Activated T-helper 2 cell treated with anti-CD3 and anti-CD28 coated beads, Interferon-gamma antibody, Interleukin-2, Interleukin-4, amounts not matched to agents 10 μg/mL and 5 μg/mL and 100 μg/mL, durations not matched to agents 14 hours and 24 hours and 36 hours (primary cell): ENCODE measurements at regions of chr4 and their contacts with region 1.

Region 1: DNA sequence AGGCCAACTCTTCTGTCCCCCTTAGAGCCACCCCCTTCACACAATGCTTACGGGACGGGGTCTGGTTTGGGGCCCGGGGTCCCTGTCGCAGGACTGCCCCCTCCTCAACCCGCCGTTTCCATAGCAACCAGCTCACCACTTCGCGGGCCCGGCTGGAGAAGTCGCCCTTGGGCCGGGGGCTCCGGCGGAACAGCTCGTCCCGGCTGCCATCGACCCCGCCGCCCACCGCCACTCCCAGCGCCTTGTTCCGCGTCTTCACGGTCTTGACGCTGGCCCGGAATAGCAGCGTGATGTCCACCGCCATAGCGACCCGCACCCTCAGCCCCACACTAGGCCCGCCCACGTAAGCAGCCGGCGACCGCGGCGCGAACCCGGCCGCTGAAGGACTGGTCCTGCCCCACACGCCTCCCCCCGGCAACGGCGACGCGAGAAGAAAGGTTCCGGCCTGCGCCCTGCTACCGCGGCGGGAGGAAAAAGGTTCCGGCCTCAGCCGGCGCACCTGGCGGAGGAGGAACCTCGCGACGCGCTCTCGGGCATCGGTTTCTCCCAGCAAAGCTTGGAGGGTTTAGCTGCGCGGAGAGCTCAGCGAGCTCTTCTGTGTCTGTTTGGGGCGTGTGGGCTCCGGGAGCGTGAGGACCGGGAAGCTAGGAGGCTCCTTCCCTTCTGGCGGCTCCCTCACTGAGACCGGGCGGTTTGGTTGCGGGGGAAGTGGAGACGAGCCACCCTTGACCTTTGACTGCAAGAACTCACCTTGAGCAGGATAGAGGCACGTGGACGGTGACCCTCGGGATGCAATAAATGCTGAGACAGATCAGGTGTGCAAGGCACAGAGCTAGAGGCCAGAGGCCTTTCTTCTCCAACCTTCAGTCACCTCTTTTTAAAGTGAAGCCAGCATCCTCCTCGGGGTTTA is at the start of gene STX18:
- DNase-seq: peak; percentile 85
- H3K4me3 Mint-ChIP-seq: peak within 1 kb of the TSS; percentile 98
- H3K27ac Mint-ChIP-seq: peak within 1 kb of the TSS; percentile 94
- H3K4me1 Mint-ChIP-seq: peaks cover 26% of the 10 kb centered on the region
- H3K27me3 Mint-ChIP-seq: no peaks in the 10 kb centered on the region
- total RNA-seq, gene STX18: 26.9 and 30.8 TPM in 2 replicates

Region 2: GRCh38 chr4:3898098-3898497 is 643.8 kb before region 1 on chr4:
- intact Hi-C with region 1: no loop called
- DNase-seq: no peak
- H3K4me3 Mint-ChIP-seq: no peak overlapping the region
- H3K27ac Mint-ChIP-seq: no peak overlapping the region
- H3K4me1 Mint-ChIP-seq: no peaks in the 10 kb centered on the region
- H3K27me3 Mint-ChIP-seq: no peaks in the 10 kb centered on the region

Region 3: DNA sequence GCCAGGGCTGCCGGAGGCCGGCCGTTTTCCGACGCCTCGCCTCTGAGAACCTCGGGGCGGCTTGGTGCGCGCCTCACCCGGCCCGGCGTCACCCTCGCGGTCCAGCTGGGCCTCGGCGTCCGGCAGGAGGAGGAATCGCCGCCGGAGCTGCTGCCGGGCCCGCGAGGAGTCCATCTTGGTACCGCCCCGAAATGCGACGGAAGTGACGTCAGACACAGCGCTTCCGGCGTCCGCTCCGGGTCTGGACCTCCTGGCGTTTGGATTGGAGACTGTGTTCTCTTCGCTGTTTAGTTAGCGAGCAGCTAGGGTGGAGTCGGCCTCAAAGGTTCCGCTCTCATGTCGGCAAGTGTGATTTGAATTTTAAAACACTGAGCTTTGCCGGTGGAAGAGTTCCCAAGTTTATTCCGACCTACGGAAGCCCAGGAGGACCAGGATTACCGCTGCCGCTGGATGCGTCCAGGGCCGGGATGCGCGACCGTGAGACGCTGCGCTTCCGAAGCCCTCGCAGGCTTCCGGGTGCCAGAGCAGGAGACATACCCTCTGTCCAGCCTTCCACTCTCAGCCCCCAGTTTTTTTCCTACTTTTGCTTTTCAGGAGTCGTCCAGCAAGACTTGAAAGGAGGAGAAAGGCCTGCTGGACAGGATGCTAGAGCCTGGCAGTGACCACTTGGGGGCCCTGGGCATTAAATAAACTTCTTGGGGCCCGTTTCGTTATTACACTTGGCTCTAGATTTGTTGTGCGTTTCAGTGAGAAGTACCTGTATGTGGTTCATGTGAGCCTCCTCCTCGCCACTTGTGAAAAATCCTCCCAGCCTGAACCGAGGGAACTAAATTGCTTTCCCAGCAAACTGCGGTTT is 293.7 kb before region 1 on chr4 and contains the start of gene TMEM128:
- intact Hi-C with region 1: loop called (anchors 2 kb)
- DNase-seq: peak; percentile 88
- H3K4me3 Mint-ChIP-seq: peak within 1 kb of the TSS; percentile 94
- H3K27ac Mint-ChIP-seq: peak within 1 kb of the TSS; percentile 94
- H3K4me1 Mint-ChIP-seq: peaks cover 20% of the 10 kb centered on the region
- H3K27me3 Mint-ChIP-seq: no peaks in the 10 kb centered on the region
- total RNA-seq, gene TMEM128: 17.6 and 18.5 TPM in 2 replicates

Region 4: GRCh38 chr4:4289941-4290850 is 251.7 kb before region 1 on chr4 and contains the starts of genes LYAR and ZBTB49:
- intact Hi-C with region 1: loop called (anchors 2 kb)
- DNase-seq: peak; percentile 96
- H3K4me3 Mint-ChIP-seq: peak within 1 kb of the TSS; percentile 96
- H3K27ac Mint-ChIP-seq: peak within 1 kb of the TSS; percentile 87
- H3K4me1 Mint-ChIP-seq: peaks cover 27% of the 10 kb centered on the region
- H3K27me3 Mint-ChIP-seq: no peaks in the 10 kb centered on the region
- total RNA-seq, gene LYAR: 61.6 and 61.7 TPM in 2 replicates
- total RNA-seq, gene ZBTB49: 6.7 and 8.3 TPM in 2 replicates

Region 5: DNA sequence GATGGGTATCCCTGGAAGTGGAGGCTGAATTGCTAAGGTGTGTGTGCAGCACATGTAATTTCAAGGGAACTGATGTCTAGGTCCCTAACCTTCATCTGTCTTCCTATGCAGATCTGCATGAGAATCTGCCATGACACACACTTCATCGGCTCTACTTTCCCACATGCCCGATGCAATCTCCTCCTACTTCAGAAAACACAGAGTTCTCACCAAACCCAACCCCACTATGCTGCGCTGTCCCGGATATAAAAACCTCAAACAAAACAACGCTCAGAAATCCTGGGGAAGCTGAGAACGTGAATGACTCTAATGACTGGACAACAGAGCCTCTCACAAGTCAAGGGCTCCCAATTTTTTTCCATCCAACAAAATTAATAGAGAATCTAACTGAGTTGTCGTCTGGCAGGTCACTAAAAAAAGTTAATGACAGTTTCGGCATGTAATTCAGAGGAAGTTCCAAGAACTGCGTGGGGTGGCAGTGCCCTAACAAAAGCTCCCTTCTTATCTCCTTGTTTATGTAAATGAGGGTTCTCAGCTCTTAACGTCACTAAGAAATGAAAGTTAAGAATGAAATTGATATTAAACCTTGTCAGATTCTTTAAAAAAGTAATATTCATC is 39.1 kb before region 1 on chr4:
- intact Hi-C with region 1: loop called (anchors 2 kb)
- DNase-seq: peak; percentile 23
- H3K4me3 Mint-ChIP-seq: peak overlapping the region; percentile 68
- H3K27ac Mint-ChIP-seq: peak overlapping the region; percentile 73
- H3K4me1 Mint-ChIP-seq: peaks cover 17% of the 10 kb centered on the region
- H3K27me3 Mint-ChIP-seq: no peaks in the 10 kb centered on the region

Region 6: GRCh38 chr4:4559596-4559995 is 17.7 kb after region 1 on chr4:
- intact Hi-C with region 1: loop called (anchors 1 kb)
- DNase-seq: no peak
- H3K4me3 Mint-ChIP-seq: no peak overlapping the region
- H3K27ac Mint-ChIP-seq: no peak overlapping the region
- H3K4me1 Mint-ChIP-seq: peaks cover 5% of the 10 kb centered on the region
- H3K27me3 Mint-ChIP-seq: no peaks in the 10 kb centered on the region